OCI-LY7 (cell line): ENCODE measurements at regions of chr3 and their contacts with region 1.

Region 1: DNA sequence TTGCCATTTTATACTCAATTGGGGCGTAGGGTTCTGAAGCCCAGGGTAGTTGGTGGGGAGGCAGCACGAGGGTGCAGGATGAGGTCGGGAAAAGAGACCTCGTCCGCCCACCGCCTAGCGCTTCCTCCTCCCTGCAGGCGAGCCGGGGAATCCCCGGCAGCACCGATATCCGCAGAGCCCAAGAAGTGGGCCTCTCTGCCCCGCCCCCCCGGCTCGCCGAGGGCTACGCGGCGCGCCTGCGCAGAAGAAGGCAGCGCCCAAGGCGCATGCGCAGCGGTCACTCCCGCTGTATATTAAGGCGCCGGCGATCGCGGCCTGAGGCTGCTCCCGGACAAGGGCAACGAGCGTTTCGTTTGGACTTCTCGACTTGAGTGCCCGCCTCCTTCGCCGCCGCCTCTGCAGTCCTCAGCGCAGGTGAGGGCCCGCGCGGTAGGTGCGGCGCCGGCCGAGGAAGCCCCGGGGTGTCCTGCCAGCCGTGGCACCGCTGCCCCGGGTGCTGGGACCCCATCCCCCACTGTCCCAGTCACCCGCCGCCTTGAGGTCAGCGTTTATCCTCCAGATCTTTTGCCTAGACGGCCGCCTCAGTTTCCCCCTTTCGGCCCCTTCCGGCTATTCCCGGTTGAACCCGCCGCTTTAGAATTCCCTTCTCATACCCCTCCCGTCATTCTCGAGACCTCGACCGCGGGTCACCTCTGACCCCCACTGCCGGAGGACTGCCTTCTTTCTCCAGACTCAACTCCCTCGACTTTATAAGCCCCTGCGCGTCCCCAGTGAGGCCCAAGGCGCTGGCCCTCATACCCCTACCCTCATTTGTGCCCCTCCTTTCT is at the start of gene ALAS1:
- DNase-seq: peak; percentile 95
- H3K4me3 ChIP-seq: peak within 1 kb of the TSS; percentile 84
- H3K27ac ChIP-seq: peak within 1 kb of the TSS; percentile 46
- H3K4me1 ChIP-seq: peaks cover 31% of the 10 kb centered on the region
- CTCF ChIP-seq: no peak
- total RNA-seq, gene ALAS1: 24.5 and 34.4 TPM in 2 replicates

Region 2: DNA sequence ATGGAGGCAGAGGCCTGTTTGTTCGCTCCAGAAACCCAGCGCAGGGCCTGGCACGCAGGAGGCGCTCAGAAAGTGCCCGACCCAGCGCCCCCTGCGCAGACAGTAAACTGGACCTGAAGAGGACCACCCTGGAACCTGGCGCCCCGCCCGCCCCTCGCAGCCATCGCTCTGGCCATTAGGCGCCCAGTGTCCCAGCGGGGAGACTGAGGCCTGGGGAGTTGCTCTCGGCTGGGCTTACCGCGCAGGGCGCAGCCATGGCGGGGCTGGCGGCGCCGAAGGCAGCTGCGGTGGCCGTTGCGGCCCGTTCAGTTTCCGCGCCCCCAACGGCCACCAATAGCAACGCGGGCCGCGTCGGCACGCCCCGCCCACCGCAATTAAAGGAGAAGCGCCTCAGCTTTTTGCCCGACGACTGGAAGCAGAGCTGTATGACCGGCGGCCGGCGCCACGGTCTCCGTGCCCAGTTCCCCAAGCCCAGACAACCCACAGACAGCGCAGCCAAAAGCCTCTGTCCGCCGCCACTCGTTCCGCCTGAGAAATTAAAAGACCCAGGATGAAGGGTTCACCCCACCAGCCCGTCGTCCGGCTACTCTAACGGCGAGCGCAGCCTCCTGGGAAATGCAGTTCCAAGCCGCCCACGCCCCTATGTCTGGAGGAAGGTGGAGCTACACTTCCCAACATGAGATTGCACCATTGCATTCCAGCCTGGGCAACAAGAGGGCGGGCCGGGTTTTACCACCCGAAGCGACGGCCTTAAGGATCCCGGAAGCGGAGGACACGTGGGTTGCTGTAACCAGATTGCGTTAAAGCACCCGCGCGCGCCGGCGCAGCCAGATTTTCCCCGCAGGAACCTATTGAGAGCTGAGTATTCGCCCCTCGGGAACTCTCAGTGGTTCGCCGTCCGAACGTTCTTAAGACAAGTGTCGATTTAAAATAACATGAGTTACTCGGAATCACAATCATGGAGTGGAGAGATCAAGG is 43.6 kb before region 1 on chr3 and contains the start of gene POC1A:
- CTCF ChIA-PET with region 1: interaction called, 3 read pairs
- POLR2A ChIA-PET with region 1: interaction called, 3 read pairs
- intact Hi-C with region 1: loop called (anchors 1 kb)
- DNase-seq: peak; percentile 94
- H3K4me3 ChIP-seq: peak within 1 kb of the TSS; percentile 93
- H3K27ac ChIP-seq: peak within 1 kb of the TSS; percentile 64
- H3K4me1 ChIP-seq: peaks cover 9% of the 10 kb centered on the region
- CTCF ChIP-seq: no peak
- total RNA-seq, gene POC1A: 34.5 and 40.0 TPM in 2 replicates

Region 3: GRCh38 chr3:52259035-52259434 is 61.0 kb after region 1 on chr3:
- CTCF ChIA-PET with region 1: no interaction called
- POLR2A ChIA-PET with region 1: no interaction called
- intact Hi-C with region 1: no loop called
- DNase-seq: no peak
- H3K4me3 ChIP-seq: no peak overlapping the region
- H3K27ac ChIP-seq: no peak overlapping the region
- H3K4me1 ChIP-seq: peaks cover 6% of the 10 kb centered on the region
- CTCF ChIP-seq: no peak

Region 4: DNA sequence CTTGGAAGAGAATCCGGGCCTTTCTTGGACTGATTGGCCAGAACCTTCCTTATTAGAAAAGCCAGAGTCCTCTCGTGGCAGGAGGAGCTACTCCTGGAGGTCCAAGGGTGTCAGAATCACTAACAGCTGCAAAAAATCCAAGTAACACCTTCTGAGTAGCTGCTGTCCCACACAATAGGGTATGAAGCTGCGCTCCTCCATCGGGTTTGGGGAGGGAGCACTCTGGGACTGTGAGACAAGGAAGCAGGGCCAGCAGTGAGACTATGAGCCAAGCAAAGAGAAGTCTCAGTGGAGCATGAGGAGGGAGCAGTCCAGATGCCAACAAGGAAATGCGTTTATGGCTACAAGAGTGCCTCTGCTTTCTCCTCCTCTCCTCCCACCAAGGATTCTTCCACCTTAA is 225.1 kb after region 1 on chr3:
- CTCF ChIA-PET with region 1: no interaction called
- POLR2A ChIA-PET with region 1: no interaction called
- intact Hi-C with region 1: no loop called
- DNase-seq: no peak
- H3K4me3 ChIP-seq: no peak overlapping the region
- H3K27ac ChIP-seq: no peak overlapping the region
- H3K4me1 ChIP-seq: no peaks in the 10 kb centered on the region
- CTCF ChIP-seq: no peak

Region 5: GRCh38 chr3:53109891-53110771 is 912.1 kb after region 1 on chr3:
- CTCF ChIA-PET with region 1: no interaction called
- POLR2A ChIA-PET with region 1: no interaction called
- intact Hi-C with region 1: no loop called
- DNase-seq: peak; percentile 65
- H3K4me3 ChIP-seq: no peak overlapping the region
- H3K27ac ChIP-seq: no peak overlapping the region
- H3K4me1 ChIP-seq: peaks cover 3% of the 10 kb centered on the region
- CTCF ChIP-seq: peak; percentile 87

Region 6: GRCh38 chr3:53604232-53604631 is 1406.2 kb after region 1 on chr3:
- CTCF ChIA-PET with region 1: no interaction called
- POLR2A ChIA-PET with region 1: no interaction called
- intact Hi-C with region 1: no loop called
- DNase-seq: no peak
- H3K4me3 ChIP-seq: no peak overlapping the region
- H3K27ac ChIP-seq: no peak overlapping the region
- H3K4me1 ChIP-seq: no peaks in the 10 kb centered on the region
- CTCF ChIP-seq: no peak